ENCODE measurements at regions of chr18 and their contacts with region 1.

Region 1: DNA sequence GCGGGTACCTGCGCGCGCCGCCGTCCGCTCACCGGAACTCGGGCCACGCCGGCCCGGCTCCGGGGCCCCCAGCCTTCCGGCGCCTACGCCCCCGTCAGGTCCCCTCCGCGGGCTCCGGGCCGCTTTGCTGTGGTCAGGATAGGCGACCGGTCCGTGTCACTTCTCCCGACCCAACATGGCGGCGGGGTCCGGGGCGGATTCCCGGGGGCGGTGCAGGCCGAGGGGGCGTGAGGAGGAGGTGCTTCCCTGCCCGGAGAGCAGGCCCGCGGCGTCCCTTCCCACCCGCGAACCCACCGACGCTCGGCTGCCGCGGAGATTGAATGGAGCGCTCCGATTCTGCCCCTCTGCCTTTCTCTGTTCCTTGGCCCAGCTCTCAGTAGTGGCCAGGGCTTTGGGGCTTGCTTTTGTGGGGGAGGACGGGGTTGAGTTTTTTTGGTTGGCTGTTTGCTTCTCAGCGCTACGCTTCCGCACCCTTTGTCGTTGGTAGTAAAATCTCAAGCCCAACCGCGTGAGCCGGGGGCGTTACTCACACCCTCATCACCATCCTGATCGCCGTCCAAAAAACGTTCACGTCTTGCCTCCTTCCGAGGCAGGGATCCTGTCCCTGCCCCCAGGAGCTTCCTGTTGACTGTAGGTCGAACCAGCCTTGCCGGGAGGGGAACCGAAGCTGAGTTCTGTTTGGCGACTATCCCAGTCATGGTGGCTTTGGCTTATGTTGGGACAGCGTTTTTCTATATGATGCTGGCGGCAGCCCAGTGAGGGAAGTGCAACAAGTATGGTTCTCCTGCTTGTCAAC is 532 bp upstream of the YES1 start:
- DNase-seq: peak; percentile 39
- ATAC-seq: peak; percentile 77
- H3K4me3 ChIP-seq: peak overlapping the region; percentile 67
- H3K27ac ChIP-seq: peak overlapping the region; percentile 81
- H3K4me1 ChIP-seq: no peaks in the 10 kb centered on the region
- H3K27me3 ChIP-seq: no peaks in the 10 kb centered on the region
- CTCF ChIP-seq: no peak
- EP300 ChIP-seq: peak in 1 of 2 experiments; percentile 41; a peak in 1 of 4 replicates
- POLR2A ChIP-seq: peak; percentile 74
- RAD21 ChIP-seq: no peak

Region 2: GRCh38 chr18:658001-658946 is 154.3 kb before region 1 on chr18:
- CTCF ChIA-PET with region 1: interaction called, 4 read pairs
- POLR2A ChIA-PET with region 1: interaction called, 7 read pairs
- RAD21 ChIA-PET with region 1: interaction called, 7 read pairs
- SMC1A ChIA-PET with region 1: interaction called, 3 read pairs
- in situ Hi-C with region 1: loop called (anchors 5 kb)
- intact Hi-C with region 1: loop called (anchors 5 kb)
- DNase-seq: peak; percentile 57
- ATAC-seq: peak; percentile 82
- H3K4me3 ChIP-seq: peak overlapping the region; percentile 92
- H3K27ac ChIP-seq: peak overlapping the region; percentile 86
- H3K4me1 ChIP-seq: peaks cover 7% of the 10 kb centered on the region
- H3K27me3 ChIP-seq: no peaks in the 10 kb centered on the region
- CTCF ChIP-seq: no peak
- EP300 ChIP-seq: no peak
- POLR2A ChIP-seq: peak; percentile 80
- RAD21 ChIP-seq: no peak

Region 3: DNA sequence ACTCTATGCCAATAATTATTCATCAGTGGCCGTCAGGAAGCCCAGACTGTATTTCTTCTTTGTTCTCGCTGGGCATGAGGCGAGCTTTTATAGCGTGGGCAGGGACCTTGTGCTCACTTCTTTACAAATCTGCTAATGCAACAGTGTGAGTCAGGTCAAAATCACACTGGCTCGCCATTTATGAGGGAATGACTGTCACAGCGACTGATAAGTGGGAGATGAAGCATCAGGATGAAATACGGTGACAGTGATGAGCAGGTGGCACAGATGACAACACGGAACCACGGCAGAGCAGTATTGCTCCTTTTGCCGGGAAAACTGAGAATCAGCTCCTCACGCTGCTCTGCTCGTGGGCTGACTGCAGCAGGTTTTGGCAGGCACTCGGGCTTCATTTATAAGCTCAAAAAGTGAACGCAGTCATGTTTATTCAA is 134.6 kb before region 1 on chr18:
- CTCF ChIA-PET with region 1: no interaction called
- POLR2A ChIA-PET with region 1: no interaction called
- RAD21 ChIA-PET with region 1: no interaction called
- SMC1A ChIA-PET with region 1: no interaction called
- in situ Hi-C with region 1: no loop called
- intact Hi-C with region 1: no loop called
- DNase-seq: no peak
- ATAC-seq: no peak
- H3K4me3 ChIP-seq: no peak overlapping the region
- H3K27ac ChIP-seq: no peak overlapping the region
- H3K4me1 ChIP-seq: no peaks in the 10 kb centered on the region
- H3K27me3 ChIP-seq: no peaks in the 10 kb centered on the region
- CTCF ChIP-seq: no peak
- EP300 ChIP-seq: no peak
- POLR2A ChIP-seq: 0 out of 2 replicates have a peak, but pooled peaks have one; percentile 16
- RAD21 ChIP-seq: no peak

Region 4: DNA sequence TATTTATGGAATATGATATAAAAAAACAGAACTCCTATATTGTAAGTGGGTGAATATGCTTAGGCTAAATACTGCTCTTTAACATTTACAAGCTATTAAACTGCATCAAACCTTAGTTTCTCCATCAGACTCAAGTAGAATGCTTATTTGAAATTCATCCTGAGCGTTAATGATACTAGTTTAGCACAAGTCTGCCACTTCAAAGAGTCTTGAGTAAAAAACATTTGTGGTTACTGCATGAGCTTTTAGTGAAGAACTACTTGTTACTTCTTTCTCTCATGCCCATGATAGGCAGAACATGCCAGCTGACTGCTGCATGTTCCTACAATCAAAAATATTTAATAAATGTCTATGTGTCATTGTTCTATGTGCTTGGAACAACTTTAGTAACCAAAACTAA is 12.6 kb before region 1 on chr18:
- CTCF ChIA-PET with region 1: interaction called, 7 read pairs
- POLR2A ChIA-PET with region 1: interaction called, 3 read pairs
- RAD21 ChIA-PET with region 1: interaction called, 10 read pairs
- SMC1A ChIA-PET with region 1: interaction called, 38 read pairs
- in situ Hi-C with region 1: no loop called
- intact Hi-C with region 1: no loop called
- DNase-seq: no peak
- ATAC-seq: no peak
- H3K4me3 ChIP-seq: no peak overlapping the region
- H3K27ac ChIP-seq: no peak overlapping the region
- H3K4me1 ChIP-seq: peaks cover 15% of the 10 kb centered on the region
- H3K27me3 ChIP-seq: no peaks in the 10 kb centered on the region
- CTCF ChIP-seq: no peak
- EP300 ChIP-seq: no peak
- POLR2A ChIP-seq: no peak
- RAD21 ChIP-seq: no peak

Region 5: DNA sequence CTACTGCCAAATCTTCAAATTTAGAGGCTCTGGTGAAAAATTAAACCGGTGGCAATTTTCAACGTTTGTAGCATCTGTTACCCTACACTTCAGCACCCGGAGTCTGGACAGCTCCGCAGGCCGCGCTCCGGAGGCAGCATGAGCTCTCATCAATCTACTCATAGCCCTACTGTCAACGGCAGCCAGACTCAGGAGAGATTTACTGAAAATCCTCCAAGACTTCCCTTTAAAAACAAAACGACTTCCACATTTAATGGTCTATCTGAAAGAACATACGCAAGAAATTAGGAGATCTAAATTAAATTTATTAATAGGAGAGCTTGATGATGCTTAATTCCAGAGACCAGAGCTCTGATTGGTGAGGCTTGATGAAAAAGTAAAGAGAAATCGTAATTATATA is 91.1 kb after region 1 on chr18:
- CTCF ChIA-PET with region 1: no interaction called
- POLR2A ChIA-PET with region 1: no interaction called
- RAD21 ChIA-PET with region 1: no interaction called
- SMC1A ChIA-PET with region 1: no interaction called
- in situ Hi-C with region 1: no loop called
- intact Hi-C with region 1: no loop called
- DNase-seq: no peak
- ATAC-seq: no peak
- H3K4me3 ChIP-seq: no peak overlapping the region
- H3K27ac ChIP-seq: no peak overlapping the region
- H3K4me1 ChIP-seq: no peaks in the 10 kb centered on the region
- H3K27me3 ChIP-seq: peaks cover 2 to 4% of the 10 kb centered on the region in 2 experiments
- CTCF ChIP-seq: no peak
- EP300 ChIP-seq: no peak
- POLR2A ChIP-seq: no peak
- RAD21 ChIP-seq: no peak

Region 6: DNA sequence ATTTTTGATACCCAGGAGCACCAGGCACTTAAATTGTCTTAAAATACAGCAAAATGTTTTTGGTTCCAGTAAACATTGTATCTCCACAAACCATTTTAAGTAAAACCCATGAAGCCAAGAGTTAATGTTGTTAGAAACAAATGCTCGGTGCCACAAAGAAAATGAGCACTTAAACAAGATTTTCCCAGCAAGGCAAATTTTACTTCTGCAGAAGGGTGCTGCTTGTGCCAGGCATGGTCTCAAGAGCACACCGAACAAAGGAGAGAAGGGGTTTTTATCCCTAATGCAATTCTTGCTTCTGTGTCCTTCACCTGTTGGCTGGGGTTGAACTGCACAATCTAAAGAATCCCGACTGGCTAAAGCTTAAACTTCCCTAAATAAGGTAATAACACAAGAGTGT is 378.8 kb after region 1 on chr18:
- CTCF ChIA-PET with region 1: no interaction called
- POLR2A ChIA-PET with region 1: no interaction called
- RAD21 ChIA-PET with region 1: no interaction called
- SMC1A ChIA-PET with region 1: no interaction called
- in situ Hi-C with region 1: no loop called
- intact Hi-C with region 1: no loop called
- DNase-seq: no peak
- ATAC-seq: no peak
- H3K4me3 ChIP-seq: no peak overlapping the region
- H3K27ac ChIP-seq: no peak overlapping the region
- H3K4me1 ChIP-seq: no peaks in the 10 kb centered on the region
- H3K27me3 ChIP-seq: no peaks in the 10 kb centered on the region
- CTCF ChIP-seq: no peak
- EP300 ChIP-seq: no peak
- POLR2A ChIP-seq: no peak
- RAD21 ChIP-seq: no peak